ENCODE measurements at regions of chr21 and their contacts with region 1.

Region 1: DNA sequence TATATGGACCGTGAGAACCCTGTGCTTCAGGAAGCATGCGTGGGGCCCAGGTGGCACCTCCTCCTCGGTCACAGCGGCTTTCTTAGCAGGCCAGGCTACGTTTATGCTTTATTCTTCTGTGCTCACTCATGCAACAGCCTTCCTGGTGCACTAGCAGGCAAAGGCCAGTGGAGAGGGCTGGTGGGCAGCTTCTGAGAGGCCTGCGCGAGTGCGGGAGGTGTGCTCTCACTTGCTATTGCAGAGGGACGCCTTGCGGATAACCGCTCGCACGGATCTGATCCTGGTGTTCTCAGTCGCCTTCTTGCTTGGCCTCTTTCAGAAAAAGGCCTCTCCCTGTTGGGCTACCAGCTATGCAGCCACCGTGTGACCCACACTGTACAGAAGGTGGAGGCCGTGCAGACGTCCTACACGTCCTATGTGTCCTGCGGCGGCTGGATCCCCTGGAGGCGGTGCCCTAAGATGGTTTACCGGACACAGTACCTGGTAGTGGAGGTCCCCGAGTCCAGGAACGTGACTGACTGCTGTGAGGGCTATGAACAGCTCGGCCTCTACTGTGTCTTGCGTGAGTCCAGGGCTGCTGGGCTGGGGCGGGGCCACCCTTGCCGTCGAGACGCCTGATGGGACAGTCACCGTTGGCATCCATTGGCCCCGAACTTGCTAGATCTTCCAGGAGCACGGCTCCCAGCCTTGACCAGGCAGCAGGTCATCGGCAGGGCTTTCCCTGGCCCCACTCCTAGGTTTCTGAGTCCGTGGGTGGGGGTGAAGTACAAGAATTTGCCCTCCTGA is 4.8 kb downstream of the UMODL1 start:
- DNase-seq: peak; percentile 52

Region 2: DNA sequence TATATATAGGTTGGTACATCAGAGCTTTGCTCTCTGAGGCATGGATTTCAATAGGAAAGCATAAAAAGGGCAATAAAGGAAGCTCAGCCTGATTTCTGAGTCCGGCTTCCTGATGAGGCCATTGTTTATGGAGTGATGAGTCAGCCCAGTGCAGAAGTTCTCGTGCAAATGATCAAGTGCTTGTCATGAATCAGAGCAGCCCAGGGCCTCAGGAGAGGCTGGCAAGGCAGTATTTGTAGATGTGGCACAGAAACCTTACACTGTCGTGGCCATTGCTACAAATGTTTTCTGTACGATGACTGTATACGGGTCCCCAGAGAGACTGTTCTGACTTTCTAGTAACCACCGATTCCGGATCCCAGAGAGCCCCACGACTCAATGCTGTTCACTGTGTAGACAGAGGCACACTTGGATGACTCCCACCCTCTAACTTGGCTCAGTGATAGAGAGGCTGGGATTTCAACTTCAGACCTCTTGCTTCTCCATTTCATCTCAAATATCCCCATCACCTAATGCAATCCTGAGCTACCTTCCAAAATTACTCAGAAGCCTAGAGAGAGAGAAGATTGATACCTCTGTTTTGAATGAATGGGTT is 22.1 kb after region 1 on chr21:
- intact Hi-C with region 1: loop called in 1 of 2 experiments (anchors 1 kb)
- DNase-seq: peak; percentile 79

Region 3: GRCh38 chr21:42135386-42136052 is 59.6 kb after region 1 on chr21:
- intact Hi-C with region 1: no loop called
- DNase-seq: no peak

Region 4: DNA sequence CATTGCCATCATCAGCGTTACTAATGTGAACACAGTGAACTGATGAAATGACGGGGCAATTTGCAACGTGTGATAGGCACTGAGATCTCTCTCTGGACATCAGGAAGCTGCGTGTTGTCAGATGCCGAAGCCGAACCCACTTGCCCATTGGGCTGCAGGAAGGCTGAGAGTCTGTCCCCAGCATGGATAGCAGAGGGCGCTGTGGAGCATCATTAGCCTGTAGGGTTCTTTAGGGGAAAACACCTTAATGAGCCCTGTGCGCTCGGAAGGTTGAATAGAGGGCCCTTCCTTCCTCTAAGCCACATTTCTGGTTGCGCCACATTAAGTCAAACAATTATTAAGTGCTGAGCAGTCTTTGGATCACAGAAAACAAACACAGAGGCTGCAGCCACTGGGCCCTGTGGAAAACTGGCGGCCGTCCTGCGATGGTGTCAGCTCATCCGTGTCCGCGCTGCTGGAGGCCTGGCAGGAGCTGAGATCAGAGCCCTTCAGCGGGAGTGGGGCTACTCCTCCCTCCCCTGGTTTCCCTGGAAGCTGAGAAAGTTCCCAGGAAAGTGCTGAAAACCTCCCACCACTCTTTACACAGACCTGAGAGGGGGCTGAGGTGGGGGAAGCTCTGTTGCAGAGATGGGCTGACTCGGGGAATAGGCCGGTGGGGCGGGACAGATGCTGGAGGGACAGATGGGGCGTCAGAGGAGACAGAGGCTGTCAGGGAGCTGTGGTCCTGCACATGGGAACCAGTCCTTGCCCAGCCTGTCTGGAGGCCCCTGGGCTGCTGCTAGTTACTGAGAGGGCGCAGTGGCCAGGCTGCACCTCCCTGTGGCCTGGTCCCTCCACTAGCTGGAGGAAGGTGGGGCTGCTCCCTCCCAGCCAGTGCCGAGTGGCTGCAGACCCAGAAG is 262.2 kb after region 1 on chr21:
- intact Hi-C with region 1: no loop called
- DNase-seq: peak; percentile 89

Measured in posterior vena cava (tissue), 2 donors.